Right cardiac atrium (tissue), 5 donors: ENCODE measurements at regions of chr6 and their contacts with region 1.

Region 1: DNA sequence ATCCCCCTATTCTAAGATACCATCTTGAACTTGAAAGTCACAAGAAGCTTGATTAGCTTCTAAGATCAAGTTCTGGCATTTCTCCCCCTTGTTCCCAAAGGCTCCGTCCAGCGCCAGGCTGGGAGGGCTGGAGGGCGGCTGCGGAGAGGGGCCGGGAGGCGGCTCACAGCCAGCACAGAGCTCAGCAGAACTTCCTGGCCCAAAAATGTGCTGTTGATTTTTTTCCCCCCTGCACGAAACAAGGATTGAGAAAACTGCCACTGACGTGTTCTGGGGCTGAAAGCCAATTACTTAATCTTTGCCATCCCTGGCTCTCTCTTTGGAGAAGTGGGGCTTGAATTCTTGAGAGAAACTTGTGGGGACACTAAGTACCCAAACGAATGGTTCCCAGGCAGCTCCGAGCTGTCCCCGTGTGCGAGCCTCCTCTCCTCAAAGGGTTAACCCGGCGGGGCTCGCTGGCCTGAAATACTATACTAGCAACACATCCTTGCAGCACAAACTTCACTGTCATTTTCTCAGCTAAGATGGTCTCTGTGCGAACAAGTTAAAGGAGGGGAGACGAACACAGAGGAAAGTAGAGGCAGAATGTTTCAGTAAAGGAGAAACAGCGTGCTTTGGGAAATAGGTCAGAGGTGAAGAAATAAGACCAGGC is 452 bp downstream of the TRAF3IP2 start:
- DNase-seq: peak; percentile 87 to 94 (median 93)
- ATAC-seq: peak; percentile 82 to 83
- H3K4me3 ChIP-seq: peak overlapping the region; percentile 92
- H3K27ac ChIP-seq: peak overlapping the region; percentile 100
- H3K4me1 ChIP-seq: peaks cover 17% of the 10 kb centered on the region
- H3K27me3 ChIP-seq: no peaks in the 10 kb centered on the region

Region 2: GRCh38 chr6:111483736-111484632 is 121.2 kb before region 1 on chr6:
- intact Hi-C with region 1: loop called in 3 of 4 experiments (anchors 2 to 10 kb)
- DNase-seq: peak; percentile 96 to 98 (median 96)
- ATAC-seq: peak; percentile 90 to 91
- H3K4me3 ChIP-seq: peak overlapping the region; percentile 93
- H3K27ac ChIP-seq: peak overlapping the region; percentile 97
- H3K4me1 ChIP-seq: no peaks in the 10 kb centered on the region
- H3K27me3 ChIP-seq: no peaks in the 10 kb centered on the region

Region 3: GRCh38 chr6:111552241-111552744 is 52.9 kb before region 1 on chr6:
- intact Hi-C with region 1: loop called in 1 of 4 experiments (anchors 5 kb)
- DNase-seq: peak; percentile 36 to 74 (median 73)
- ATAC-seq: peak; percentile 87 to 89
- H3K4me3 ChIP-seq: no peak overlapping the region
- H3K27ac ChIP-seq: peak overlapping the region; percentile 26
- H3K4me1 ChIP-seq: peaks cover 12% of the 10 kb centered on the region
- H3K27me3 ChIP-seq: no peaks in the 10 kb centered on the region

Region 4: GRCh38 chr6:111663692-111664564 is 58.7 kb after region 1 on chr6:
- intact Hi-C with region 1: loop called in 2 of 4 experiments (anchors 10 kb)
- DNase-seq: peak; percentile 74 to 93 (median 90)
- ATAC-seq: peak; percentile 61 to 74
- H3K4me3 ChIP-seq: no peak overlapping the region
- H3K27ac ChIP-seq: peak overlapping the region; percentile 97
- H3K4me1 ChIP-seq: peaks cover 22% of the 10 kb centered on the region
- H3K27me3 ChIP-seq: no peaks in the 10 kb centered on the region